GM10248 (cell line): ENCODE measurements at regions of chr10 and their contacts with region 1.

Region 1: GRCh38 chr10:62696798-62697197 is 107.7 kb upstream of the ADO start:
- DNase-seq: no peak
- CTCF ChIP-seq: no peak

Region 2: GRCh38 chr10:62580396-62580795 is 116.4 kb before region 1 on chr10:
- CTCF ChIA-PET with region 1: no interaction called
- POLR2A ChIA-PET with region 1: no interaction called
- DNase-seq: no peak
- CTCF ChIP-seq: no peak

Region 3: GRCh38 chr10:62707810-62708209 is 11.0 kb after region 1 on chr10:
- CTCF ChIA-PET with region 1: interaction called, 42 read pairs
- POLR2A ChIA-PET with region 1: no interaction called
- DNase-seq: no peak
- CTCF ChIP-seq: no peak

Region 4: GRCh38 chr10:62916141-62916603 is 219.4 kb after region 1 on chr10:
- CTCF ChIA-PET with region 1: no interaction called
- POLR2A ChIA-PET with region 1: no interaction called
- DNase-seq: no peak
- CTCF ChIP-seq: no peak